ENCODE measurements at regions of chr5 and their contacts with region 1.

Region 1: DNA sequence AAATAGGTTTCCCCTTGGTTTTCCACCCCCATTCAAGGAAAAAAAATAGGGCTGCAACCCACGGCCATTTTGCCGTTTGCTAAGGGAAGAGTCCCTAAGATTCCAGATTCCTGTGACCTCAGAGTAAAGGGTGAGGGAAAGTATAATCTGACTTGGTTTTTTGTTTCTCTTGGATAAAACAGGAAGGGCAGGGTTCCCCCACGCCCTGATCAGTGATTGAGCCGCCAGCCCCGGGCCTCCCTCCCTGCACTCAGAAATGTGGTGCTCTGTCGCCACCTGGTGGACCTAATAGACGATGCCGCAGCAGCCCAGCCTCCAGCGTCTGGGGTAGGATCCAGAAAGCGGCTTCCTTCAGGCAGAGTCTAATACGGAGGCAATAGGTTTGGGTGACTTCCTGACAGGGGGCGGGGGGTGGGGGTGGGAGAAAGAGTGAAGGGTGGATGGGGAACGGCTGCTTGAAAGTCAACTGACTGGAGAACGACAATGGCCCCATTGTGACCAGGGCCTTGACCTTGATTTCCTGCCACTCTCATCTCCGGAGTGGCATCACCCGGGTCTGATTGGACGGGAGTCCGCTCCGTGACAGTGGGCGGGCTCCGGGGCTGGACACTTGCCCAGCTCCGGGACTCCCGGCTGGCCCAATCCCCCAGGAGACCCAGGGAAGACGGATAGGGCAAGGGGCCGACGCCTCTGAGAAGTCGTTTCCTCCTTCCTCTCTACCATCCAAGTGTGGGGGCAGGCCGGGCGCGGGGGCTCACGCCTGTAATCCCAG is 17.8 kb upstream of the CYSTM1 start:
- DNase-seq: peak; percentile 72 to 85 (median 82)
- ATAC-seq: peak; percentile 99
- H3K4me3 ChIP-seq: no peak overlapping the region
- H3K4me3 Mint-ChIP-seq: peak overlapping the region in 9 of 10 donors; percentile 7 to 66 (median 62)
- H3K27ac ChIP-seq: no peak overlapping the region
- H3K27ac Mint-ChIP-seq: peak overlapping the region in 4 of 9 donors; percentile 5 to 51 (median 32)
- H3K4me1 ChIP-seq: peaks cover 0 to 5% of the 10 kb centered on the region in 2 donors
- H3K4me1 Mint-ChIP-seq: peaks cover 3 to 12% (median 8%) of the 10 kb centered on the region in 7 donors
- H3K27me3 ChIP-seq: no peaks in the 10 kb centered on the region
- H3K27me3 Mint-ChIP-seq: peaks cover 0 to under 1% (median 0%) of the 10 kb centered on the region in 5 donors

Region 2: DNA sequence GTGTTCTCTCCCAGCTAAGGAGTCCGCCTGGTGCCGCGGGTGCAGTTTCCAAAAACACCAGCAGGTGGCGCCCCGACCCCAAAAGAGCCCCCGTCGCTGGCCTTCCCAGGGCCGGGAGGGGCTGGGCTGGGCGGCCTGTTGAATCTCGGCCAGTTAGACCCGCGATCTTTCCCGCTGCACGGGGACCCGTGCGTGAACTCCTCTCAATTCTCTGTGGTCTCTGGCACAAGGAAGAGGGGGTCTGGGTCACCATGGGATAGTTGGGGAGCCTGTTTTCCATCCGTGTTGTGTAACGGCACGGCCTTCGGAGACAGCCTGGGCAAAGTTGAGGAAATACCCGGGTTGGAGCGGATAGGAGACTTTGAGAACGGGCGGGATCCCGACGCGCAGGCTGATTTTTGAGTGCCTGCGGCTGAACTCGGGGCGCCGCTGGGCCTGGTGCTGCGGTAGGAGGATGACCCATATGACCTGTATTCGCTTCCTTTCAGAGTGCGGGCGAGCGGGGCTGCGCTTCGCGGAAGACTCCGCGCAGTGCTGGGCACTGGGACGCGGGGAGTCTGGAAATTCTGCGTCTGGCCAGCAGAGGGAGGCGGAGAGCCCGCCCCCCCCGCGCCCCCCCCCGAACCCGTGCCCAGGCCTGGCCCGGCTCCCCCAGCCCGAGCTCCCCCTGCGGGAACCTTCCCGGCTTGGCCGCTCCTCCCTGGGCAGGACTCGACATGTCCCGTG is 369.5 kb before region 1 on chr5:
- CTCF ChIA-PET with region 1: no interaction called
- POLR2A ChIA-PET with region 1: no interaction called
- intact Hi-C with region 1: loop called (anchors 1 kb)
- DNase-seq: peak; percentile 48 to 91 (median 82)
- ATAC-seq: peak; percentile 92
- H3K4me3 ChIP-seq: peak overlapping the region; percentile 84
- H3K4me3 Mint-ChIP-seq: peak overlapping the region; percentile 79 to 88 (median 84)
- H3K27ac ChIP-seq: no peak overlapping the region
- H3K27ac Mint-ChIP-seq: peak overlapping the region in 1 of 9 donors; percentile 41
- H3K4me1 ChIP-seq: peaks cover 4% of the 10 kb centered on the region in 2 donors
- H3K4me1 Mint-ChIP-seq: peaks cover 0 to 7% (median 0%) of the 10 kb centered on the region in 7 donors
- H3K27me3 ChIP-seq: peaks cover 0 to 6% of the 10 kb centered on the region in 2 donors
- H3K27me3 Mint-ChIP-seq: peaks cover 17 to 48% (median 27%) of the 10 kb centered on the region in 5 donors

Region 3: DNA sequence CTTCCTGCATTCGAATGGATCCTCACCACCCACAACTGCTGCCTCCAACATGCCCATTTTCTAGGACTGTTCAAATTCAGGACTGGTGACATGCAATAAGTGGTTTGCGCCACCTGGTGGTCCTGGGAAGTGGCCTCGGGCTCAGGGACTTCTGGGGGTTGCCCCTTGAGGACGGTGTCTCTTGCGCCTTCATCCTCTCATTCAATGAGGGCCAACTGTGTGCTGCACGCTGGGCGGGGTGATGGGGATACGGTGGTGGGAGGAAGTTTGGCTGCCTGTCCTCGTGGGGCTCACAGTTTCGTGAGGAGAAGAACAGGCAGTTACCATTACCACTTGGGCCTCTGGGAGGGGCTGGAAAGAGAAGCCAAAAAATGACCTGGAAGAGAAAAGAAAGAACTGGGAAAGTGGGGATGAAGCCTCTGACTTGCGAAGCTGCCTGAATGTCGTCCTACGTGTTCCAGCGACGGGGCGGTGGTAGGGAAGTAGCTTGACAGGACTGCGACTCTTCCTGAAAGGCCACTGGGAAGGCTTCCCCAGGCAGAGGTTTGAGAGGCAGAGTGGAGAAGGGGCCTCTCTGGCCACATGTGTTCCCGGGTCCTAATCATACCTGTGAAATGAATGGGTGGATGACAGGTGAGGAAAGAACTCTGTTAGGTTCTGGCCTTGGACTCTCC is 312.6 kb before region 1 on chr5:
- CTCF ChIA-PET with region 1: no interaction called
- POLR2A ChIA-PET with region 1: no interaction called
- intact Hi-C with region 1: loop called (anchors 10 kb)
- DNase-seq: peak; percentile 26 to 62 (median 57)
- ATAC-seq: peak; percentile 28
- H3K4me3 ChIP-seq: no peak overlapping the region
- H3K4me3 Mint-ChIP-seq: peak overlapping the region in 2 of 10 donors; percentile 21 to 49
- H3K27ac ChIP-seq: no peak overlapping the region
- H3K27ac Mint-ChIP-seq: no peak overlapping the region
- H3K4me1 ChIP-seq: peaks cover 0 to 5% of the 10 kb centered on the region in 2 donors
- H3K4me1 Mint-ChIP-seq: peaks cover 7 to 17% (median 12%) of the 10 kb centered on the region in 7 donors
- H3K27me3 ChIP-seq: no peaks in the 10 kb centered on the region
- H3K27me3 Mint-ChIP-seq: peaks cover 13 to 59% (median 16%) of the 10 kb centered on the region in 5 donors

Region 4: DNA sequence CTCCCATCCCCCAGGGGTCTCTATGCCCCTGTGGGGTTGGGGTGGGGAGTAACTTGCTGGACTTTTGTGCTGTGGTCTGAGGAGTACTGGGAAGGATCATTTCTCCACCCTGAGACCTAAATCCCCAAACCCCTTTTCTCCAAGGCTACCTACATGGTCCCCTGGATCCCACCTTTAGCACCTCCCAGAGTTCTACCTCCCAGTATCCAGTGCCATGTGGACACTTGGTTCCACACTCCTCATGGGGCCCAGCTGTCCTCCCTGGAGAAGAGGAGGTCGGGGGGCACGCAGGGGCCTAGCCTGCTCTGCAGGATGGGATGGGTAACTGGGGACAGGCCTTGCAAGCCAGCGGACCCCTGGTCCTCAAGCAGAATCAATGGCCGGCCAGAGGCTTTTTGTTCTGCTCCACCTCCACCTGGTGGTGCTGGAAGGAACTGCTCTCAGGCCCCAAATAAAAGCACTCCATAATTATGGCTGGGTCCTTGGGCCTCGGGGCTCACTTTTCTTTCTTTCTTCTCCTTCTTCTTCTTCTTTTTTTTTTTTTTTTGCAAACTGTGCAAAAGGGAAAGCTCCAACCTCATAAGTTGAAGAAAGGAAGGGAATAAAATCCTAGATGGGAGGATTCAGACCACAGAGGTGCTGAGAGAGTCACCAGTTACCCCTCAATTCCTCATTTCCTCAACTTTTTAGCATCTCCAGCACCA is 293.2 kb before region 1 on chr5:
- CTCF ChIA-PET with region 1: no interaction called
- POLR2A ChIA-PET with region 1: no interaction called
- intact Hi-C with region 1: loop called in 1 of 2 experiments (anchors 2 kb)
- DNase-seq: peak; percentile 12 to 57 (median 28)
- ATAC-seq: peak; percentile 68
- H3K4me3 ChIP-seq: no peak overlapping the region
- H3K4me3 Mint-ChIP-seq: no peak overlapping the region
- H3K27ac ChIP-seq: no peak overlapping the region
- H3K27ac Mint-ChIP-seq: no peak overlapping the region
- H3K4me1 ChIP-seq: no peaks in the 10 kb centered on the region
- H3K4me1 Mint-ChIP-seq: peaks cover 0 to 2% (median 0%) of the 10 kb centered on the region in 7 donors
- H3K27me3 ChIP-seq: no peaks in the 10 kb centered on the region
- H3K27me3 Mint-ChIP-seq: peaks cover 0 to 19% (median 10%) of the 10 kb centered on the region in 5 donors

Region 5: GRCh38 chr5:140073296-140073695 is 83.9 kb before region 1 on chr5:
- CTCF ChIA-PET with region 1: interaction called, 62 read pairs
- POLR2A ChIA-PET with region 1: no interaction called
- intact Hi-C with region 1: loop called (anchors 1 kb)
- DNase-seq: peak in 6 of 9 donors; percentile 25 to 54 (median 44)
- ATAC-seq: no peak
- H3K4me3 ChIP-seq: no peak overlapping the region
- H3K4me3 Mint-ChIP-seq: no peak overlapping the region
- H3K27ac ChIP-seq: no peak overlapping the region
- H3K27ac Mint-ChIP-seq: no peak overlapping the region
- H3K4me1 ChIP-seq: no peaks in the 10 kb centered on the region
- H3K4me1 Mint-ChIP-seq: no peaks in the 10 kb centered on the region
- H3K27me3 ChIP-seq: no peaks in the 10 kb centered on the region
- H3K27me3 Mint-ChIP-seq: peaks cover 12 to 50% (median 24%) of the 10 kb centered on the region in 5 donors

Region 6: DNA sequence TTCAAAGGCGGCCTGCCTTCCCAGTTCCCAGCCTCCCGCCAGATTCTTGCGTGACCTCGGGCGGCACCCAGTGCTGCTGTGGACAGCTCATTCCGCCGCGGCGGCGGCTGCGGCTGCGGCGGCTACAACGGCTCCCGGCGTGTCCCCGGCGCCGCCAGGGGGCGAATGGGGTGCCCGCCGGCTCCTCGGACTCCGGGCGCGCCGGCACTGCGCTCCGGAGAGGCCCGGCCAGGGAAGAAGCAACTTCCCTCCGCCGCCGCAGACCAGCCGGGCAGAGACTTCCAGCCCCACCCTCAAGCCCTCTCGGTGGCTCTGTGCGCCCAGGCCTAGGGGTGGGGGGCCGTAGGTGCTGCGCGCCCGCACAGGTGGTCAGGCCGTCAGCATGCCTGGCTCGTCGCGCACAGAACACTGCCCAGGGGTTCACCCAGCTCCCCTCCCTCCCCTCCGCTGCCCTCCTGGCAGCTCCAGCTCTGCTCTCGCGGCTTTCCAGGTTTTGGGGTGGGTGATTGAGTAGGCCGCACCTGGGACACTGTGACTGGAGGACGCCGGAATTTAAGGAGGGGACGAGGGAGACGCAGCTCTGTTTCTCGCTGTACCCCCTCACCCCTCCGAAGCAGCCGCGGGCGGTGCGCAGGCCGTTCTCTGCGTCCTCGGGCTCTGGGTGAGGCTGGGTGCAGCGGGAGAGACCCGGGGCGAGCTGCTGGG is 11.2 kb before region 1 on chr5:
- CTCF ChIA-PET with region 1: interaction called, 21 read pairs
- POLR2A ChIA-PET with region 1: no interaction called
- intact Hi-C with region 1: loop called (anchors 1 kb)
- DNase-seq: peak in 8 of 9 donors; percentile 25 to 69 (median 42)
- ATAC-seq: peak; percentile 86
- H3K4me3 ChIP-seq: peak overlapping the region; percentile 27
- H3K4me3 Mint-ChIP-seq: peak overlapping the region in 9 of 10 donors; percentile 16 to 81 (median 72)
- H3K27ac ChIP-seq: no peak overlapping the region
- H3K27ac Mint-ChIP-seq: no peak overlapping the region
- H3K4me1 ChIP-seq: peaks cover 6 to 9% of the 10 kb centered on the region in 2 donors
- H3K4me1 Mint-ChIP-seq: peaks cover 14 to 29% (median 25%) of the 10 kb centered on the region in 7 donors
- H3K27me3 ChIP-seq: peaks cover 0 to 6% of the 10 kb centered on the region in 2 donors
- H3K27me3 Mint-ChIP-seq: peaks cover 9 to 48% (median 21%) of the 10 kb centered on the region in 5 donors